K562 (cell line): ENCODE measurements at regions of chr2 and their contacts with region 1.

Region 1: DNA sequence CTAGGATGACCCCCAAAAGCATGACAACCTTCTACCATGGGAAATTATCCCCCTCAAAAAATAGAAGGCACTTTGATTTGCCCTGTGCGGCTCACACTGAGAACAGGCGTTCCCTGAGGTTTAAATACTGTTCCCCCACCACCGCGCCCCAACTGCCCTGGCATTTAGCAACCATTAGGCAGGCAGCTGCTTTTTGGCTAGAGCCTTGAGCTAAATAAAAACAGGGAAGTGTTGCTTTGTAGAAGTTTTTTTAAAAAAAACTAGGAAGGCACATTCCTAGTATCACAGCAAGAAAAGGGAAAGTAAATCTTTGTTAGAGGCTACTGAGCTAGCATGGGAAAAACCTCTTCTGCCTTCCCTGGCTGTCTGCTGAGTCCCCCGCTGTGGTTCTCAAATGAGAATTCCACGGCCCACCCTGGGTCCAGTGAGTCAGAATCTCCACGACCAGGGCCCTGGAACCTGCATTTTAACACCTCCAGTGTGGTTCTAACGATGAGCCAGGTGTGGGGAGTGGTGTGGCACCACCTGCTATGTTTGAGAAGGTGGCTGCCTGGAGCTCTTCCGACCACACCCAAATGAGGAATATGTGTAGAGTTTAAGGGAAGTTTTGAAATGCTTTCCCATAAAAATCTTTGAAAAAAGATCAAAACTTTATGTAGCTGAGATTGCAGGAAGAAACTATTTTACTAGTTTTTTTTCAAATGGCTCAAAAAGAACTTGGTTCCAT is 66.4 kb downstream of the VIT start:
- DNase-seq: no peak
- ATAC-seq: no peak
- H3K4me3 ChIP-seq: no peak overlapping the region
- H3K27ac ChIP-seq: no peak overlapping the region
- H3K4me1 ChIP-seq: no peaks in the 10 kb centered on the region
- H3K27me3 ChIP-seq: peaks cover 27 to 30% of the 10 kb centered on the region in 2 experiments; a peak in 4 of 5 replicates
- CTCF ChIP-seq: no peak
- EP300 ChIP-seq: no peak
- POLR2A ChIP-seq: no peak
- RAD21 ChIP-seq: no peak

Region 2: DNA sequence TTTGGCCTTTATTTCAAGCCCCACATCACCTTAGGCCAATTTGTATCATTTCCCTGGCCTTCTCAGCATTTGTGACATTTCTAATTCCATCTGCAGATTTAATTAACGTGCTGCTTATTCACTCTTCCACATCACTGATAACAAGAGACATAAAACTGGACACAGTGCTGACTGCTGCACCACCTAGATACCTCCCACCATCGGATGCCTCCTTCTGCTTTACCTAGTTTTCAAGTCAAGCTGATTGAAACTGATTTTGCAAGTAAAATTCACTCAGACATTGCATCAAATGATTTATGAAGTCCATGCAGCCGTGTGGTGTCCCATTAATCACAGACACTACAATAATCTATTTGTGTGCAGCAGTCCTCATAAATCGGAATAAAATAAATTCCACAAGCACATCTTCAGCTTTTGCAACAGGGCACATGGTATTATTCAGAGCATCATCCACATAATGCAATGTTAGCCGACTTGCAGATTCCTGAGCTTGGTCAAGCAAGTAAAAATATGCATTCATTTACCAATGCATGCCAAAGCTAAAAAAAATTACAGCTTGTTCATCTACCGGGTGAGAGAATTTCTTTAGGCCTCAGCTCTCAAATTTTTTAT is 423.2 kb before region 1 on chr2:
- CTCF ChIA-PET with region 1: no interaction called
- POLR2A ChIA-PET with region 1: no interaction called
- in situ Hi-C with region 1: loop called (anchors 10 kb)
- intact Hi-C with region 1: no loop called
- DNase-seq: no peak
- ATAC-seq: no peak
- H3K4me3 ChIP-seq: no peak overlapping the region
- H3K27ac ChIP-seq: no peak overlapping the region
- H3K4me1 ChIP-seq: no peaks in the 10 kb centered on the region
- H3K27me3 ChIP-seq: no peaks in the 10 kb centered on the region
- CTCF ChIP-seq: no peak
- EP300 ChIP-seq: no peak
- POLR2A ChIP-seq: no peak
- RAD21 ChIP-seq: no peak